H1 (cell line): ENCODE measurements at regions of chr11 and their contacts with region 1.

Region 1: GRCh38 chr11:27621405-27622161 is 78.7 kb downstream of the BDNF start:
- DNase-seq: no peak
- H3K4me3 ChIP-seq: no peak overlapping the region
- H3K27ac ChIP-seq: no peak overlapping the region
- H3K4me1 ChIP-seq: peaks cover 0 to 10% (median 0%) of the 10 kb centered on the region in 4 experiments; a peak in 3 of 7 replicates
- H3K27me3 ChIP-seq: no peaks in the 10 kb centered on the region
- CTCF ChIP-seq: no peak
- EP300 ChIP-seq: no peak
- POLR2A ChIP-seq: peak in 1 of 2 experiments; percentile 63; a peak in 1 of 3 replicates
- RAD21 ChIP-seq: no peak

Region 2: GRCh38 chr11:27485930-27486773 is 135.4 kb before region 1 on chr11:
- CTCF ChIA-PET with region 1: no interaction called
- POLR2A ChIA-PET with region 1: no interaction called
- DNase-seq: no peak
- H3K4me3 ChIP-seq: no peak overlapping the region
- H3K27ac ChIP-seq: no peak overlapping the region
- H3K4me1 ChIP-seq: peaks cover 0 to 4% (median 2%) of the 10 kb centered on the region in 4 experiments; a peak in 3 of 7 replicates
- H3K27me3 ChIP-seq: no peaks in the 10 kb centered on the region
- CTCF ChIP-seq: peak in 2 of 3 experiments; percentile 63 to 78; a peak in 2 of 4 replicates
- EP300 ChIP-seq: no peak
- POLR2A ChIP-seq: no peak
- RAD21 ChIP-seq: peak; percentile 87 to 97

Region 3: GRCh38 chr11:27635567-27636037 is 14.0 kb after region 1 on chr11:
- CTCF ChIA-PET with region 1: interaction called, 3 read pairs
- POLR2A ChIA-PET with region 1: interaction called, 189 read pairs
- DNase-seq: peak in 1 of 2 experiments; percentile 51
- H3K4me3 ChIP-seq: peak overlapping the region in 3 of 4 experiments; percentile 17 to 50 (median 31); a peak in 2 of 8 replicates
- H3K27ac ChIP-seq: peak overlapping the region; percentile 74
- H3K4me1 ChIP-seq: peaks cover 6 to 17% (median 14%) of the 10 kb centered on the region in 4 experiments; a peak in 6 of 7 replicates
- H3K27me3 ChIP-seq: no peaks in the 10 kb centered on the region; a peak in 1 of 7 replicates
- CTCF ChIP-seq: no peak
- EP300 ChIP-seq: no peak
- POLR2A ChIP-seq: peak; percentile 84 to 85
- RAD21 ChIP-seq: no peak

Region 4: DNA sequence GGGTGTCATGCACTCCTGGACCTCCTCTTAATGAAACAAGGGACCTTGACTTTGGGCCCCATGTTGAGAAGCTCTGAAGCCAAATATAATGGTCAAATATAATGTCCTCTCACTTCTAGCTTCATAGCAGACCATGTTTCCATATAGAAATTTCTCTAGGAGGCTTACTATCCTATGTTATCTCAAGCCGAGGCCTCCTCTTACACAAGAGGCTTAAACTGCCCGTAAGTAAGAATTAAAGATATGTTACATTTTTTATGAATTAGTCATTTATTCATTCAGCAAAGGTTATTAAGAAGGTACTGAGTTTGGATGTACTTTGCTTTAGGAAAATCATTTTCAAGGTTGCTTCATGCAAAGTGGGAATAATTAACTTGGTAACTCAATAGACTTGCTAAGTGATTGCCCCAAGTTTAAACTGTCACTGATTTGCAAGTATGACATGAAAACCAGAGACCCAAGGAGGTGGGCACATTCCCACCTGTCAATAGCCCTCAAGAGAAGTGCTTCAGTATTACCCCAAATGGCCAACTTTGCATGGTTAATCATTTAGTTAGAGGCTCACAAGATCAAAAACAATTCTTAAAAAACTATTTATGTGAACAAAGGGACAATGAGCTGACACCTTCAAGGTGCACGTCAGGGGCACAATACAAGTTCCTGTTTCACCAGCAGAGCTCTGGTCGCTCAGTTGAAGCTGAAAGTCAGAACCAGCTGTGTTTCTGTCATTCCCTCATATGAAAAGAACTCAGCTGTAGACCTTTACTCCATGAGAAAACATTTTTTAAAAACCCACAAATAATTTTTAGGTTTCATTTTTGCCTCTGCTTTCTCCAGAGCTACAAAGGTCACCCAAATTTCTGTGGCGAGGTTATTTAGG is 57.8 kb after region 1 on chr11:
- CTCF ChIA-PET with region 1: no interaction called
- POLR2A ChIA-PET with region 1: interaction called, 14 read pairs
- DNase-seq: no peak
- H3K4me3 ChIP-seq: no peak overlapping the region
- H3K27ac ChIP-seq: no peak overlapping the region
- H3K4me1 ChIP-seq: no peaks in the 10 kb centered on the region
- H3K27me3 ChIP-seq: no peaks in the 10 kb centered on the region
- CTCF ChIP-seq: no peak
- EP300 ChIP-seq: no peak
- POLR2A ChIP-seq: no peak
- RAD21 ChIP-seq: no peak

Region 5: DNA sequence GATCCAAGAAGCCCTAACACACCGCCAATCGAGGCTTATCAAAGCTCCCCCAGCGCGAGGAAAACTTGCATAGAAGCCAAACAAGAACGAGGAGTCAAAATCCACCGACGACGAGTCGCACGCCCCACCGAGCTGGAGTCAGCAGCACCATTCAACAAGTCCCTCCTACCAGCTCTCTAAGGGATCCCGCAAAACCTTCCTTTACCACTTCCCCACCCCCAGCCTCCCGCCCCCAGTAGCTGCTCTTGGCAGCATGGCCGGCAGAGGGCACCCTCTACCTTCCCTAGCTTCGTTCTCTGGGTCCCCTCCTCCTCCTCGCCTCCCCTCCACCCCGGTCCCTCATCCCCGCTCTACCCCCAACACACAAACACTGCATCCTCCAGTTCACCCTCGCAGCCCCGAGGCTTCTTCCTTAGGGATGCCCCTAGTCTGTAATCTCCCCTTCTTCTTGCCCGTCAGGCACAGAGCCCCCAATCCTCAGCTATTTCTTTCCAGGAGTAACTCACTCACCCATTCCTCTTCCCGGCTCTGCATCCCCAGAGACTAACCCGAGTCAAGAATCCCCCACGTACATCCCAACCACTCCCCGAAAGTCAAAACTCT is 77.4 kb after region 1 on chr11:
- CTCF ChIA-PET with region 1: interaction called, 3 read pairs
- POLR2A ChIA-PET with region 1: interaction called, 78 read pairs
- DNase-seq: peak; percentile 83 to 97
- H3K4me3 ChIP-seq: peak overlapping the region; percentile 61 to 95 (median 83)
- H3K27ac ChIP-seq: no peak overlapping the region; the same call in 1 of the 2 replicates
- H3K4me1 ChIP-seq: peaks cover 1 to 18% (median 3%) of the 10 kb centered on the region in 4 experiments; a peak in 4 of 7 replicates
- H3K27me3 ChIP-seq: peaks cover 8 to 28% (median 20%) of the 10 kb centered on the region in 4 experiments
- CTCF ChIP-seq: peak; percentile 72 to 89 (median 73)
- EP300 ChIP-seq: no peak
- POLR2A ChIP-seq: no peak
- RAD21 ChIP-seq: peak; percentile 87 to 90